Caco-2 (cell line): ENCODE measurements at regions of chr3 and their contacts with region 1.

Region 1: DNA sequence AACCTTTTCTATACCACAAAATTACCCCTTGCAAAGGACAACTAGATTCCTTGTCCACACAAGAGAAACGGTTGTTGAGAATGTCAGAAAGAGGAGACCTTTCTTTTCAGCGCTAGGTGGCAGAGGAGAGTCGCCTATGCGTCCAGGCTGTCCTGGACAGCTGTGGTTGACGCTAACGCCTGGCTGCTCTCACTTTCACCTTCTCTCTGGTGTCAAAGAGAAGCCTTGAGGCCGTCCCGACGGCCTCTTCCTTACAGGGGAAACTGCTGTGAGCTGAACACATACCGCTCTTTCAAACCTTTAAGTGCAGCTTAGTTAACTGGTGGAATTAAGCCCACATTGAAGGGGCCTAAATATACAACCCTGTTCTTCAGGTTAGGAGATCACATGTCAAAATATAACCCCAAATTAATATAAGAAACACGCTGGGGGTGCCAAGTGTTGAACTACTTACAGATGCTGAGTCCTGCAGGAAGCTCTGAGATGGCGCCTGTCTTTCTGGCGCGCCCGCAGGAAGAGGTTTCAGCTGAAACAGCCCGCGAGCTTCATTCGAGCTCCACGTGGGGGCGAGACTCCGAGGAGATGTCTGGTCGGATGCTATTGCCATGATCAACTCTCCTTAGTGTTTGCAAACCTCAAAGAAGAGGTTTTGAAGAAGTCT is 26.1 kb upstream of the KBTBD8 start:
- DNase-seq: peak; percentile 76 to 78
- H3K4me3 ChIP-seq: peak overlapping the region; percentile 18; the same call in 1 of the 2 replicates
- H3K4me3 Mint-ChIP-seq: peak overlapping the region; percentile 58
- H3K27ac Mint-ChIP-seq: no peak overlapping the region
- H3K4me1 ChIP-seq: peaks cover 6% of the 10 kb centered on the region; the same call in 1 of the 2 replicates
- H3K4me1 Mint-ChIP-seq: no peaks in the 10 kb centered on the region
- H3K27me3 ChIP-seq: no peaks in the 10 kb centered on the region
- H3K27me3 Mint-ChIP-seq: peaks cover 6% of the 10 kb centered on the region
- CTCF ChIP-seq: peak; percentile 70 to 83

Region 2: GRCh38 chr3:66998113-66998903 is 26.3 kb after region 1 on chr3 and contains the start of gene KBTBD8:
- CTCF ChIA-PET with region 1: interaction called, 15 read pairs
- POLR2A ChIA-PET with region 1: no interaction called
- intact Hi-C with region 1: no loop called
- DNase-seq: peak; percentile 98
- H3K4me3 ChIP-seq: peak within 1 kb of the TSS; percentile 86
- H3K4me3 Mint-ChIP-seq: peak within 1 kb of the TSS; percentile 88
- H3K27ac Mint-ChIP-seq: no peak within 1 kb of the TSS
- H3K4me1 ChIP-seq: no peaks in the 10 kb centered on the region
- H3K4me1 Mint-ChIP-seq: no peaks in the 10 kb centered on the region
- H3K27me3 ChIP-seq: no peaks in the 10 kb centered on the region
- H3K27me3 Mint-ChIP-seq: no peaks in the 10 kb centered on the region
- CTCF ChIP-seq: no peak
- total RNA-seq, gene KBTBD8: 5.8 and 6.8 TPM in 2 replicates

Region 3: DNA sequence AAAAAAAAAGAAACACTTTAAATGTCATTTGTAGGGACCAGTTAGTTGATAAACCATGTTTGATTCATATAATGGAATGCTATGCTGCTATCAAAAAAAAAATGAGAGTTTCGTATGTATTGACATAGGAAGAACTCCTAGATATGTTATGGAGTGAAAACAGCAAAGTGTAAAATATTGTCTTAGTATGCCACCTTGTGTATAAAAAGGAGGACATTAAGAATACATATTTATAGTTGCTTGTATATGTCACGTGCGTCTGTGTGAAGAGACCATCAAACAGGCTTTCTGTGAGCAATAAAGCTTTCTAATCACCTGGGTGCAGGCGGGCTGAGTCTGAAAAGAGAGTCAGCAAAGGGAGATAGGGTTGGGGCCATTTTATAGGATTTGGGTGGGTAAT is 65.6 kb after region 1 on chr3:
- CTCF ChIA-PET with region 1: interaction called, 4 read pairs
- POLR2A ChIA-PET with region 1: no interaction called
- intact Hi-C with region 1: loop called (anchors 1 kb)
- DNase-seq: no peak
- H3K4me3 ChIP-seq: no peak overlapping the region
- H3K4me3 Mint-ChIP-seq: no peak overlapping the region
- H3K27ac Mint-ChIP-seq: no peak overlapping the region
- H3K4me1 ChIP-seq: no peaks in the 10 kb centered on the region
- H3K4me1 Mint-ChIP-seq: peaks cover 5% of the 10 kb centered on the region
- H3K27me3 ChIP-seq: no peaks in the 10 kb centered on the region
- H3K27me3 Mint-ChIP-seq: peaks cover 3% of the 10 kb centered on the region
- CTCF ChIP-seq: no peak

Region 4: GRCh38 chr3:67357610-67358458 is 385.8 kb after region 1 on chr3:
- CTCF ChIA-PET with region 1: interaction called, 3 read pairs
- POLR2A ChIA-PET with region 1: no interaction called
- intact Hi-C with region 1: loop called (anchors 1 kb)
- DNase-seq: peak; percentile 58 to 65
- H3K4me3 ChIP-seq: no peak overlapping the region
- H3K4me3 Mint-ChIP-seq: no peak overlapping the region
- H3K27ac Mint-ChIP-seq: no peak overlapping the region
- H3K4me1 ChIP-seq: no peaks in the 10 kb centered on the region; the same call in 1 of the 2 replicates
- H3K4me1 Mint-ChIP-seq: peaks cover 7% of the 10 kb centered on the region
- H3K27me3 ChIP-seq: no peaks in the 10 kb centered on the region
- H3K27me3 Mint-ChIP-seq: no peaks in the 10 kb centered on the region
- CTCF ChIP-seq: peak; percentile 64 to 76